ENCODE measurements at regions of chr2 and their contacts with region 1.

Region 1: DNA sequence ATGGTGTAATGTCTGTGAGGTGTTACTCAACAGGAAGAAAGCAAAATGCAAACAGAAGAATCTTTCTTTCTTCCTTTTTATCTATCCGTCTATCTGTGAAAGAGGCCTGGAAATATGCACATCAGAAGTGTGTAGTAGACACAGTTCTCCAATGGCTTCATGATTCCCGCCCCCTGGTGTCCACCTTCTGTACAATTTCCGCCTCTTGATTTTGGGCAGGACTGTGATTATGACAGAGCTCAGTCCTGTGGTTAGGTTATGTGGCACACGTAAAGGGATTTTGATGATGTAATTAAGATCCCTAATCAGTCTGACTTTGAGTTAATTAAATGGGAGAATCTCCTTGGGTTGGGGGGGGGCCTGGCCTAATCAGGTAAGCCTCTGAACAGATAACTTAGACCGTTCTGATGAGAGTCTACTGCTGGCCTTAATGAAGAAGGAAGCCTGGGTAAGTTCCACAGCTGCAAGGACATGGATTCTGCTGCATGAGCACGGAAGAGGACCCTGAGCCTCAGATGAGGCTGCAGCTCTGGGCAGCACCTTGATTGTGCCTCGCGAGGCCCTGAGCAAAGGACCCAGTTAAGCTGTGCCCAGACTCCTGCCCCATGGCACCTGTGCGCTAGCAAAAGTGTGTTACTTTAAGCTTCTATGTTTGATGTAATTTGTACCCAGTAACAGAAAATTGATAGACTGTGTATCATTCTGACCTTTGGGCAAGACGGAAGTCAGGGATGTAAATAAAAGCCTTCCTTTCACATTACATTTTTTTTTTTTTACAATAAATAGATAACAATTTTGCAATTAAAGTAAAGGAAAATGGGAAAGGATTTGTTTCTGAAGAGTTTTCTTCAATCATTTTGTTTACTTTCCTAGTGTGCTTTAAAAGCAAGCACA is 11.3 kb upstream of the KCNF1 start:
- DNase-seq: no peak
- ATAC-seq: peak; percentile 79
- H3K4me3 ChIP-seq: no peak overlapping the region
- H3K27ac ChIP-seq: no peak overlapping the region
- H3K4me1 ChIP-seq: no peaks in the 10 kb centered on the region; the same call in 1 of the 2 replicates
- H3K27me3 ChIP-seq: no peaks in the 10 kb centered on the region; the same call in 1 of the 2 replicates
- CTCF ChIP-seq: peak; percentile 65

Region 2: DNA sequence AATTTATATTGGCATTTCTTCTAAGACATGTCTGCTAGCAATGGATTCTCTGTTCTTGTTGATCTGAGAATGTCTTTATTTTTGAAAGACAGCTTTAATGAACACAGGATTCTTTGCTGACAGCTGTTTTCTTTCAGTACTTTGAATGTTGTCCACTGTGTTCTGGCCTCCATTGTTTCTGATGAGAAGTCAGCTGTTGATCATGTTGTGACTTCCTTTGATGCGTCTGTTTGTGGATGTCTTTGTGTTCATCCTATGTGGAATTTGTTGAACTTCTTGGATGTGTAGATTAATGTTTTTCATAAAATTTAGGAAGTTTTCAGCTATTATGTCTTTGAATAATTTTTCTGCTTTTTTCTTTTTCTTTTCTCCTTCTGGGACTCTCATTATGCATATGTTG is 28.5 kb before region 1 on chr2:
- CTCF ChIA-PET with region 1: no interaction called
- POLR2A ChIA-PET with region 1: interaction called, 11 read pairs
- in situ Hi-C with region 1: no loop called
- intact Hi-C with region 1: no loop called
- DNase-seq: no peak
- ATAC-seq: no peak
- H3K4me3 ChIP-seq: no peak overlapping the region
- H3K27ac ChIP-seq: no peak overlapping the region
- H3K4me1 ChIP-seq: no peaks in the 10 kb centered on the region
- H3K27me3 ChIP-seq: no peaks in the 10 kb centered on the region
- CTCF ChIP-seq: no peak

Region 3: DNA sequence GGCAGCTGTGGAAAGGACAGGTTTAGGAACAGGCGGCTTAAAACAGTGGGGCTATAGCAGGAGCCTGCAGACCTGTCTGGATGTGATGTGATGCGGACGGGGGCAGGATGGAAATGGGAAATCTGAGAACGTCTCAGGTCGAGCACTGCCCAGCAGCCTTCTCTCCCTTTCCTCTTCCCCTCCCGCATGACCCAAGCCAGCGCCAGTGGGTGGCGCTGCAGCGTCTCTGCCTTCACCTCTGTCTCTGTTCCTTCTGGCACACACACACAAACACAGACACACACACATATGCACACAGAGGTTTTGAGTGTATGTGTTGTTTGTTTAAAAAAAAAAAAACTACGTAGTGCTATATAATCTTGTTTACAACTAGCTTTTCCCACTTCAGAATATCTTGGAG is 172.8 kb after region 1 on chr2:
- CTCF ChIA-PET with region 1: no interaction called
- POLR2A ChIA-PET with region 1: interaction called, 13 read pairs
- in situ Hi-C with region 1: no loop called
- intact Hi-C with region 1: no loop called
- DNase-seq: no peak
- ATAC-seq: peak; percentile 57; the same call in 1 of the 2 replicates
- H3K4me3 ChIP-seq: no peak overlapping the region
- H3K27ac ChIP-seq: no peak overlapping the region
- H3K4me1 ChIP-seq: peaks cover 4% of the 10 kb centered on the region; the same call in 1 of the 2 replicates
- H3K27me3 ChIP-seq: no peaks in the 10 kb centered on the region
- CTCF ChIP-seq: peak; percentile 73